ENCODE measurements at regions of chr12 and their contacts with region 1.

Region 1: GRCh38 chr12:31406345-31406744 is 80.4 kb upstream of the SINHCAF start:
- DNase-seq: no peak
- H3K4me3 ChIP-seq: no peak overlapping the region
- H3K27me3 ChIP-seq: no peaks in the 10 kb centered on the region
- CTCF ChIP-seq: no peak

Region 2: DNA sequence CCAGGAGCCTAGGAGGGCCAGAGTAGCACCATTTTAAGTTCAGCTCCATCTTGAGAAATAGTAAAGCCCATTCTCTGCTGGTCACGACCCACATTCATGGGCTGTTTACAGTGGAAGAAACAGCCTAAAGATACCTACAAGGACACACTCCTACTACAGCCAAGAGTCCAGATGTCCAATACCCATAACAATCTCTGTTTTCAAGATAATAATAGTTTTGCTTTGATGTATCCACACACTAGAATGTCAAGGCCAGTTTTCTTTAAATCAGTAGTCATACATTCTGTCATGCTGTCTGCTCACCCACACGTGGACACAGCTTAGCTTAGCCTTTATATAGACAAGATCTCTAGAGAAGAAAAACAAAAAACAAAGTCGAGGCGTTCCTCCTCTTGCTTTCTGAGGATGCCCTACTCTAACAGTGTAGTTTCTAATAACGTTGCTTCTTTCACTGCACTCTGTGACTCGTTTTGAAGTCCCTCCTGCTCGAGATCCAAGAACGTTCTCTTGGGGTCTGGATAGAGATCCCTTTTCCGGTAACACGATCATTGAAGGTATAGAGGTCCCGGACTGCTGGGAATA is 235.3 kb after region 1 on chr12:
- CTCF ChIA-PET with region 1: interaction called, 14 read pairs
- POLR2A ChIA-PET with region 1: no interaction called
- DNase-seq: no peak
- H3K4me3 ChIP-seq: no peak overlapping the region
- H3K27me3 ChIP-seq: no peaks in the 10 kb centered on the region; the same call in 1 of the 2 replicates
- CTCF ChIP-seq: no peak

Measured in BJ (cell line).